A549 (cell line): ENCODE measurements at regions of chr1 and their contacts with region 1.

Region 1: GRCh38 chr1:40802078-40802741 is 18.6 kb downstream of the KCNQ4 start:
- DNase-seq: peak; percentile 42 to 65
- ATAC-seq: peak; percentile 44 to 85; a peak in 3 of 6 replicates
- H3K4me3 ChIP-seq: peak overlapping the region; percentile 54
- H3K27ac ChIP-seq: peak overlapping the region; percentile 57 to 80; a peak in 5 of 6 replicates
- H3K4me1 ChIP-seq: peaks cover 10% of the 10 kb centered on the region; the same call in 2 of the 3 replicates
- CTCF ChIP-seq: no peak
- EP300 ChIP-seq: no peak
- POLR2A ChIP-seq: no peak
- RAD21 ChIP-seq: no peak

Region 2: DNA sequence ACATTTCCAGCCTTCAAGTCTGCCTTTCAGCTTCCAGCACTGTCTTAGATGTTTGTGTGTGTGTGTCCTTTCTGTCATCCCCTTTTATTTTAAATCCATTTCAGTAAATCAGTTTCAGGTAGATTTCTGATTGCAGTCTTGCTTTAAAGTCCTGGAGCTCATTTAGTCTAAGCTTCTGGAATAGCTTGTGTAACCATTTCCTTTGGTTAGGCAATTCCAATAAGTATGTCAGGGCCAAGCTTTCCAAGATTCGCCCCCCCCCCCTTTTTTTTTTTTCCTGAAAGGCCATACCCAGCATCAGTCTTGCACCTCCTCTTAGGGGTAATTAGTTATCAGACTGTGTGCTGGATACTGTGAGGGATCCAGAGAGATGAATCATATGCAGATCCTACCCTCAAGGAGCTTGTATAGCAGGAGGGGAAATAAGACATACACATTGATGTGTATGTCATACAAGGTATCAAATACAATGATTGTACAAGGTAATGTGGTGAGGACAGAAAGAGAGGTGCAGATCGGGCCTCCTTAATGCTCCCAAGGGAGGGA is 69.4 kb before region 1 on chr1:
- CTCF ChIA-PET with region 1: no interaction called
- POLR2A ChIA-PET with region 1: interaction called, 11 read pairs
- DNase-seq: no peak
- ATAC-seq: no peak
- H3K4me3 ChIP-seq: no peak overlapping the region
- H3K27ac ChIP-seq: no peak overlapping the region
- H3K4me1 ChIP-seq: peaks cover 7% of the 10 kb centered on the region; the same call in 2 of the 3 replicates
- CTCF ChIP-seq: no peak
- EP300 ChIP-seq: no peak
- POLR2A ChIP-seq: no peak
- RAD21 ChIP-seq: no peak

Region 3: DNA sequence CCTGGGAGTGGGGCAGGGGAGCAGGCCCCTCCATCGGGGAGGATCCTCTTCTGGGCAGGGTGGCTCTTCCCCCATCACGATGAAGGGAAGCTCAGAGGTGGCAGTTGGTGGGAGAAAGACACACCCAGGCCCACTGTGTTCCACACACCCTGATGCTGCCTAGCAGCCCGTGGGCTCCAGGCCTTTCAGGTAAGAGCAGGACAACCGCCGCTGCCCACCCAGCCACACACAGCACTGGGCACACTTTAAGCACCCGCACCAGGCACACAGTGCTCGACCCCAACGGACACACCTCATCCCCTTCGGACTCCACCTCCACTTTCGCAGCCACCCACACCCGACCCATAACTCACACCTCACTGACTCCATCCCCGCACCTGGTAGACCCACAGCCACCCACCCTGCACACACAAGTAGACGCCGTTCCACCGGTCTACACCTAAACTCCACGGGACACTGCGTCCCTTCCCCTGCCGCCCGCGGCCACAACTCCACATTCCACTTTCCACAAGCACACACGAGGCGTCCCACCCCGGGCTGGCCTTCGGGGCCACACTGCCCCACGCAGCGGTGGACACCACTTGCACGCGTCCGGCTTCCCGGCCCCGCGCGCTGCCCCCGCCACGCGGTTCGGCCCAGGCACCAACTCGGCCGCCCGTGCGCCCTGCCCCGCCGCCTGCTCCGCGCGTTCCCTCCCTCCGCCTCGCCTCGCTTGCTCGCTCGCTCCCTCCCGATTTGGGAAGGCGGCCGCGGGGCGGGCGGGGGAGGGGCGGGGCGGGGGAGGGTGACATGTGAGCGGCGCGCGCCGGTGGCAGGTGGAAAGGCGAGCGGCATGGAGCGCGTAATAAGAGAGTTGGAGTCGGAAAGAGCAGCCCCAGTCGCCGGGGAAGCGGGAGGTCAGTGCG is 19.0 kb before region 1 on chr1 and contains the start of gene KCNQ4:
- CTCF ChIA-PET with region 1: no interaction called
- POLR2A ChIA-PET with region 1: no interaction called
- DNase-seq: no peak
- ATAC-seq: peak in 1 of 2 experiments; percentile 35; a peak in 3 of 6 replicates
- H3K4me3 ChIP-seq: peak within 1 kb of the TSS; percentile 53
- H3K27ac ChIP-seq: peak within 1 kb of the TSS; percentile 59 to 88; a peak in 4 of 6 replicates
- H3K4me1 ChIP-seq: no peaks in the 10 kb centered on the region
- CTCF ChIP-seq: no peak
- EP300 ChIP-seq: no peak
- POLR2A ChIP-seq: no peak
- RAD21 ChIP-seq: no peak
- polyA plus RNA-seq, gene KCNQ4: 0.08 and 0.09 TPM in 2 replicates